ENCODE measurements at regions of chr11 and their contacts with region 1.

Region 1: DNA sequence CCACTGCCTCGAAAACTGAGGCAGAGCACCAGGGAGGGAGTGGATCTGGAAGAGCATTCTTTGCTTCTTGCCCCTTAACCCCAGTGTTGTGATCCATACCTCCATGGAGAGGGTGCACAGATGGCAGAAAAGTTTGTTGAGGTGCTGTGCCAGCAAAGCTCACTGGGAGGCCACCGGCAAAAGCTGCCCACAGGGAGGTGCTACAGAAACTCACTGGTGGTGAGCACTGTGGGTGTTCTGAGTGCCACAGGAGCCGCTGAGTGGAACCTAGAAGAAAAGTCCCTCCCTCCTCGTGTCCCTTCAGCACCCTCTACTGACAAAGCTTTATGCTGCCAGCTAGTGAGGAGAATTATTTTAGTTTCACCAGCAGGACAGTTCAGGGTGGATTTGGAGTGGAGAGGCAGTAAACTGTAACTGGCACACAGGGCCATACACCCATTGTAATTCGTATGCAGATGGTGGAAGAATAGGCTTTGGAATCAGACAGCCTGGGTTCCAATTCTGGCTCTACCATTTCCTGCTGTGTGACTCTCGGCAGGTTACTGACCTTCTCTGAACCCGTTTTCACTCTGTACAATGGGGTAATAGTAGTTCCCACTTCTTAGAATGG is 84.6 kb downstream of the SWAP70 start:
- DNase-seq: peak; percentile 81
- H3K4me3 ChIP-seq: no peak overlapping the region
- H3K27ac ChIP-seq: no peak overlapping the region
- H3K4me1 ChIP-seq: peaks cover 16% of the 10 kb centered on the region
- H3K27me3 ChIP-seq: no peaks in the 10 kb centered on the region
- CTCF ChIP-seq: peak; percentile 60 to 66
- POLR2A ChIP-seq: peak; percentile 1

Region 2: DNA sequence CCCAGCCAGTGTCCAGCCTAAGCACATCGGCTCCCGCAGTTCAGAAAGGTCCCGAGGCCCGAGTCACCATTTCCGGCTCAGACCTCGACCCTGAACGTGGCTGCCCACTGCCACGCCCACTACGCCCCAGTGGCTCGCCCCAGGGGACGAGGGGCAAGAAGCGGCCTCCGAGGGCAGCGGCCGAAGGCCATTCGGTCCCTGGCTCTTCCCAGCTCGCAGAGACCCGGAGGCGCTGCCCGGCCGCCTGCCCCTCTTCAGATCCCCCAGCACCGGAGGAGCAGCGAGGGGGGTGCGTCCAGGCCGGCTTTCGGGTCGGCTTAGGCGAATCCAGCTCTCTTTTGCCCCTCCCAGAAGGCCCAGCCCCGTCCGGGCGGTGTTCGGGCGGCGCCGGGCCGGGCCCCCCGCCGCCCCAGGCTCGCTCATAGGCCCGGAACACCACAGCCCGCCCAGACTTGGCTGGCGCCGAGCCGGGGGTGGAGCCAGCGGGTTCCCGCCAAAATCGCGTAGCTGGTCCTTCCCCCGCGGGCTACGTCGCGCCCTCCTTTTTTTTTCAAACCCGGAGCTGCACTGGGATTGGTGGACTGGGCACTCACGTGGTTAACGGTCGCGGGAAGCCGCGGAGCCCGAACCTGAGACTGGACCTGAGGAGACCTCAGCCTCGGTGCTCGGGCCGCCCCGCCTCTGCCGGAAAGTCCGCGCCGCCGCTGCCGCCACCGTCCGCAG is 175.3 kb before region 1 on chr11 and contains the start of gene WEE1:
- CTCF ChIA-PET with region 1: interaction called, 17 read pairs
- POLR2A ChIA-PET with region 1: no interaction called
- dilution Hi-C with region 1: no loop called
- intact Hi-C with region 1: loop called (anchors 2 kb)
- DNase-seq: peak; percentile 99
- H3K4me3 ChIP-seq: peak within 1 kb of the TSS; percentile 56 to 97 (median 63)
- H3K27ac ChIP-seq: peak within 1 kb of the TSS; percentile 83
- H3K4me1 ChIP-seq: peaks cover 34% of the 10 kb centered on the region
- H3K27me3 ChIP-seq: no peaks in the 10 kb centered on the region
- CTCF ChIP-seq: no peak
- POLR2A ChIP-seq: peak; percentile 50
- total RNA-seq, gene WEE1: 42.8 and 47.0 TPM in 2 replicates

Region 3: DNA sequence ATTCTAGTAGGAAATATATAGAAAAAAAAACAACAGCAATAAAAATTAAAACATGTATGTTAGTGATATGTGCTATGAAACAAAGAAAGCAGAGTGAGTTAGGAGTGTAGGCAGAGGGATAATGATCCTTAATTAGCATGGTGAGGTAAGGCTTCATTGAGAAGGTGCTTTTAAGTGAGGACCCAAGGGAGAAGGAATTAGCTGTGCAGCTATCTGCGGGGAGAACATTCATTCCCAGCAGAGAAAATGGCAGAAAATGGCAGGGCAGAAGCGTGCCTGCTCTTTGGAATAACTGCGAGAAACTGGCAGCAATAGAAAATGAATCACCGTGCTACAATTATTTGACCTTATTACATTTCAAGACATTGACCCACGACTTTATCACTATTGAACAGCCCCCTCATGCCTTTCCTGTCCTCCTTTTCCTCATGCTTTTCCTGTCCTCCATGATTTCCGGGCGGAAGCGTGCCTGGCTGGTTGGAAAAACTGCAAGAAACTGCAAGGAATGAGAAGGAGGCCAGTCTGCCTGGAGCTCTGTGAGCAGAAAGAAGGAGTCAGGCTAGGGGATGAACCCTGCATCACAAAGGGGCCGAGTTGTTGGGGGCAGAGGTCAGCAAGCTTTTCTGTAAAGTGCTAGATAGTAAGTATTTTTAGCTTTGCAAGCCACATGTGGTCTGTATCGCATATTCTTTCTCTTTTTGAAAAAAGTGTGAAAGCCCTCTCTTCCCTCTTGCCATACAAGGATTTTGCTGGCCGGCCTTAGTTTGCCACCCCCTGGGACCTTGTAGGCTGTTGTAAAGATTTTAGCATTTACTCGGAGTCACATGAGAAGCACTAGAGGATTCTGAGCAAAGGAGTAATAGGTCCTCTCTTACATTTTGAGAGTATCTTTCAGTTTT is 121.7 kb before region 1 on chr11:
- CTCF ChIA-PET with region 1: interaction called, 18 read pairs
- POLR2A ChIA-PET with region 1: no interaction called
- dilution Hi-C with region 1: loop called (anchors 25 kb)
- intact Hi-C with region 1: no loop called
- DNase-seq: peak; percentile 96
- H3K4me3 ChIP-seq: peak overlapping the region in 1 of 3 experiments; percentile 19
- H3K27ac ChIP-seq: peak overlapping the region; percentile 96
- H3K4me1 ChIP-seq: peaks cover 33% of the 10 kb centered on the region
- H3K27me3 ChIP-seq: no peaks in the 10 kb centered on the region
- CTCF ChIP-seq: no peak
- POLR2A ChIP-seq: peak; percentile 84

Region 4: DNA sequence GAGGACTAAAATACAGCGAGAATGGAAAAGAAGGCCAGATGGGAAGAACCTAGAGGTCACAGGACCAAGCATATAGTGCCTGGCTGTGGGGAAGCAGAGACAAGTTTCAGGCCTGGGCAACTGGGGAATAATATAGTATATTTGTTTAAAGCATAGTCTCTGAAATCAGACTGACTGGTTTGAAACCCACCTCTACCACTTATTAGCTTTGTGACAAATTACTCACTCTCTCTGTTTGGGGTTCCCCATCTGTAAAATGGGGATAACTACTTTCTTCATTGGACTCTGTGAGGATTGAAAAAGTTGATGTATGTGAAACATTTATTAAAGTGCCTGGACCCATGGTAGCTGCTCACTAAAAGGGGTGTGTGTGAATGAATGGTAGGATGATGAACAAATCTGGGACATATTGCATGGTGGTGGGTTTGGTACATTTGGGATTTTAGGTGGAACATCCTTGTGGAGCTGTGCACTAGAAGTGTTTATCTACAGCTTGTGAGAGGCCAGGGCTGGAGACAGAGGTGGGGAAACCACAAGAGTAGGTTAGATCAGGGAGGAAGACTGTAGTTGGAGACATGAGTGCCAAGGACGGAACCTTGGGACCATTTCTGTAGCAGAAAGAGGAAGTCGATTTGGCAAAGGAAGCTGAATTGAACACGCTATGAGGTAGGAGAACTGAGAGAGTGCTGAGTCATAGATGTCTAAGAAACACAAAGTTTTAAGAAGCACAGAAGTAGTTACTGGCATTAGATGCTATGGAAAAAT is 32.0 kb before region 1 on chr11:
- CTCF ChIA-PET with region 1: interaction called, 12 read pairs
- POLR2A ChIA-PET with region 1: no interaction called
- dilution Hi-C with region 1: no loop called
- intact Hi-C with region 1: no loop called
- DNase-seq: peak; percentile 97
- H3K4me3 ChIP-seq: no peak overlapping the region
- H3K27ac ChIP-seq: peak overlapping the region; percentile 94
- H3K4me1 ChIP-seq: peaks cover 64% of the 10 kb centered on the region
- H3K27me3 ChIP-seq: no peaks in the 10 kb centered on the region
- CTCF ChIP-seq: no peak
- POLR2A ChIP-seq: no peak

Region 5: DNA sequence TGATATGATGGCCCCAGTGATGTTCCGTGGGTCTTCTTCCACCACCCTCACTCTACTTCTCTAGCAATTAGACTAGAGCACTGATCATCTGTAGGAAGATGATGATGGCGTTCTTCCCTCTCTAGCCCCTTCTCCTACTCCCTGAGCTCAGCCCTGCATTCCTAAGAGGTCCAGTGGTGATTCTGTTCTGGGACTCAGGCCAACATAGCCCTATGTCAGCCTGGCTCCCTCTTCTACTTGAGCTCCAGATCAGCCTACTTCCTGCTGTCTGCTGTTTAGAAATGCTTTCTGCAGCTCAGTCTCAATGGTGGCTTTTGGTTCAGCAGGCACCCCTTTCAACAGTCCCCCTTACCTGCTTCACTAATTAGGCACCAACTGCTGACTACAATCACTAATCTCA is 1195.5 kb after region 1 on chr11:
- CTCF ChIA-PET with region 1: no interaction called
- POLR2A ChIA-PET with region 1: no interaction called
- dilution Hi-C with region 1: no loop called
- intact Hi-C with region 1: no loop called
- DNase-seq: no peak
- H3K4me3 ChIP-seq: no peak overlapping the region
- H3K27ac ChIP-seq: no peak overlapping the region
- H3K4me1 ChIP-seq: no peaks in the 10 kb centered on the region
- H3K27me3 ChIP-seq: peaks cover 3 to 13% of the 10 kb centered on the region in 2 experiments
- CTCF ChIP-seq: no peak
- POLR2A ChIP-seq: no peak

Measured in endothelial cell of umbilical vein (primary cell).